ENCODE measurements at regions of chr2 and their contacts with region 1.

Region 1: DNA sequence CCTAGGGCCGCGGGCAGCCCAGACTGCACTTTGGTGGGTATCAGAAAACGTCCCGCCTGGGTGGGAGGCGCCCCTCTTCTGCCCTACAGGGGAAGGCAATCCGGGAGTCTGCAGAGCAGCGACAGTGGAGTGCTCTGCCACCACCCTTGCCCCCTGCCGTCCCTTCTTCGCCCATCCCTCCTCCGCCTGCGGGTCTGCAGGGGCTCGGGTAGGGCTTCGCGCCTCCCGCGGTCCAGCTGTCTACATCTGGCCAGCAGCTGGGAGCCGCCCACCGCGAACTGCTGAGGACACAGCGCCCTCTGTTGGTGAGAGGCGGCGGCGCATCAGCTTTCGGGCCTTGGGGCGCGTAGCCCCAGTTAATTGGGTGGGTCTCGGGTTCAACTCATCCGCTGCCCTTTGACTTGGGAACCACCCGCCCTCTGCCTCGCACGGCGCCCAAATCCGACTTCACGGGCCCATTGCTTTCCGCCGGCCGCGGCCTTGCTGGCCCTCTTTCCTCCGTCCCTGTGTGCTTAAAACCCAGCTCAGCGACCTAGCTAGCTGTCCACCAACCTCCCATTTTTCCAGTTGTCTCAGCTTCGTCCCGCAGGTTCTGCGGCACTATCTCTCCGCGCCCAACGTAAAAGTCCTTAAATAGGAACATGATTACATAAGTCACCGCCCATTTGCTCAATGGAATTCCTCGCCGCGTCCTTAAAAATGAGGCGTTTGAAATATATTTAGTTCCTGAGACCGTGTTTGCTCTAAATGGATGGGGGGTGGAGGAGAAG is 17.6 kb downstream of the WNT10A start:
- DNase-seq: peak; percentile 94
- H3K4me3 ChIP-seq: peak overlapping the region in 4 of 8 donors; percentile 9 to 67 (median 36)
- H3K27ac ChIP-seq: peak overlapping the region in 1 of 8 donors; percentile 86
- H3K4me1 ChIP-seq: peaks cover 28 to 56% (median 53%) of the 10 kb centered on the region in 6 donors
- H3K27me3 ChIP-seq: peaks cover 0 to 97% (median 37%) of the 10 kb centered on the region in 7 donors
- CTCF ChIP-seq: peak; percentile 92 to 99 (median 96)
- POLR2A ChIP-seq: no peak

Region 2: GRCh38 chr2:218722876-218723785 is 175.2 kb before region 1 on chr2:
- intact Hi-C with region 1: no loop called
- DNase-seq: no peak
- H3K4me3 ChIP-seq: no peak overlapping the region
- H3K27ac ChIP-seq: peak overlapping the region in 3 of 8 donors; percentile 5 to 20 (median 18)
- H3K4me1 ChIP-seq: peaks cover 0 to 21% (median 0%) of the 10 kb centered on the region in 6 donors
- H3K27me3 ChIP-seq: no peaks in the 10 kb centered on the region
- CTCF ChIP-seq: no peak
- POLR2A ChIP-seq: no peak

Region 3: DNA sequence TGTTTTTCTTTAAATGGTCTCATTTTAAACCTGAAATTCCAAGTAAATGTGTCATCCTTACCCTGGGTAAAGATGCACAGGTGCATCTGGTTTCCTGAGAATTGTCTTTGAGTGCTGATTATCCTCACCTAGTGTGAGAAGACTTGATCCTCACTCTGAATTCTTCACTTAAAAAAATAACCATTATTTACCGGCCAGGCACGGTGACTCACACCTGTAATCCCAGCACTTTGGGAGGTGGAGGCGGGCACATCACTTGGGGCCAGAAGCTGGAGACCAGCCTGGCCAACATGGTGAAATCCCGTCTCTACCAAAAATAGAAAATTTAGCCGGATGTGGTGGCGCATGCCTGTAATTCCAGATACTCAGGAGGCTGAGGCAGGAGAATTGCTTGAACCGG is 48.6 kb before region 1 on chr2:
- intact Hi-C with region 1: loop called (anchors 2 kb)
- DNase-seq: no peak
- H3K4me3 ChIP-seq: no peak overlapping the region
- H3K27ac ChIP-seq: no peak overlapping the region
- H3K4me1 ChIP-seq: peaks cover 0 to 18% (median 5%) of the 10 kb centered on the region in 6 donors
- H3K27me3 ChIP-seq: peaks cover 0 to 69% (median 20%) of the 10 kb centered on the region in 7 donors
- CTCF ChIP-seq: no peak
- POLR2A ChIP-seq: no peak

Region 4: DNA sequence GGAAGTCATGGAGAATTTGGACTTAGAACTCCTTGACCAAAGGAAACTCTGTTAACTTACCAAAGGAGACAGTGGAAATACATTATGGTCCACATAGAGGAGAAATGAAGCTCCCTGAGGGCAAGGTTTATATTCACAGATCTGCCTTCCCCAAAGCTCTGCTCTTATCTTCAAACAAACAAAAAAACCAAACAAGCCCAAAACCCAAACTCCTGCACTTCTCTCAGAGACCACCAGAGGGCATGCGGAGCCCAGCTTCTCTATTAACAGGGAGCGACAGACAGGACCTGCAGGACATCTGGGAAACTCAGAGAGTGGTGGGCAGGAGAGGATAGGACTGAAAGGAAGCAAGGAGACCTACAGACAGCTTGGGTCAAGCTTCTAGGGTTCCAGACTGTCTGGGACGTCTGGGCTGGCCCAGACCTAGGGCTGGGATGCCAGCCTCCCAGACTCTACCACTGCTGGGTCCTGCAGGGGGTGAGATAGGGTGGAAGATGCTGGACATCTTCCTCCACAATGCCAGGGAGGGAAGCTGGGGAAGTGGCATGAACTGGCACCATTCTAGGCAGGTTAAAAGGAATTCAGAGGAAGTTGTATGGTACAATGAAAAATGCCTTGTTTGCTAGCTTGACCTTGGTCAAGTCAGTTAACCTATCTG is 21.6 kb before region 1 on chr2:
- intact Hi-C with region 1: loop called (anchors 1 kb)
- DNase-seq: peak; percentile 85
- H3K4me3 ChIP-seq: no peak overlapping the region
- H3K27ac ChIP-seq: no peak overlapping the region
- H3K4me1 ChIP-seq: peaks cover 18 to 79% (median 66%) of the 10 kb centered on the region in 6 donors
- H3K27me3 ChIP-seq: peaks cover 0 to 99% (median 38%) of the 10 kb centered on the region in 7 donors
- CTCF ChIP-seq: peak; percentile 91 to 97 (median 94)
- POLR2A ChIP-seq: no peak

Region 5: DNA sequence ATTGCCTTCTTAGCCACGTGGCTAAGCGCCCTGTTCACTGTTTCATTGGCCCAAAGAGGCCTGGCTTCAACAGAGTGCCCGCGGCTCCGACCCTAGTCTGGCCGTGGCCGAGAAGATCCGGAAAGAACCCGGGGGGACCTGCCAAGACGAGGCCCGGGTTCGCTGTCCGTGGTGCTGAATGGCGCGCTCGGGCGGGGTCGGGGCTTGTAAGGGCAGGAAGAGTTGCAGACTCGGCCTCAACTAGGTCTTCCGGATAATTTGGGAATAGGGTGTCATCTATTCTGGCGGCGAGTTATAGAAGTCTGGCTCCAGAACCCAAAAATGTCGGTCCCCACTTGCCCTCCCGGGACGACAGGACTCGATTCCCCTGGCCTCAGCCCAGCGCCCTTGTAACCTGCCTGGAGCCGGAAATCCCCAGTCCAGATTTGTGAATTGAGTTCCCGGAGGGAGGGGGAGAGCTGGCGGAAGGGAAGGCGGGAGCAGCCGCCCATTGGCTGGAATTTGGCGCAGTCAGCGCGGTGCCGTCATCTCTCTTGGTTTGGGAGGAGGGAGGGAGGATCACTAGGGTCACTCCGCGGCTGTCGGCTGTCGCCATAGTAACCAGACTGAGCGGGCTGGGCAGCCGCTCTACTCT is 64.7 kb after region 1 on chr2:
- intact Hi-C with region 1: no loop called
- DNase-seq: no peak
- H3K4me3 ChIP-seq: peak overlapping the region in 2 of 8 donors; percentile 9 to 47
- H3K27ac ChIP-seq: no peak overlapping the region
- H3K4me1 ChIP-seq: peaks cover 3 to 43% (median 27%) of the 10 kb centered on the region in 6 donors
- H3K27me3 ChIP-seq: peaks cover 0 to 98% (median 80%) of the 10 kb centered on the region in 7 donors
- CTCF ChIP-seq: peak in 1 of 11 experiments; percentile 11
- POLR2A ChIP-seq: no peak

Measured in spleen (tissue), 13 donors.